Mammary epithelial cell (primary cell): ENCODE measurements at regions of chr19 and their contacts with region 1.

Region 1: DNA sequence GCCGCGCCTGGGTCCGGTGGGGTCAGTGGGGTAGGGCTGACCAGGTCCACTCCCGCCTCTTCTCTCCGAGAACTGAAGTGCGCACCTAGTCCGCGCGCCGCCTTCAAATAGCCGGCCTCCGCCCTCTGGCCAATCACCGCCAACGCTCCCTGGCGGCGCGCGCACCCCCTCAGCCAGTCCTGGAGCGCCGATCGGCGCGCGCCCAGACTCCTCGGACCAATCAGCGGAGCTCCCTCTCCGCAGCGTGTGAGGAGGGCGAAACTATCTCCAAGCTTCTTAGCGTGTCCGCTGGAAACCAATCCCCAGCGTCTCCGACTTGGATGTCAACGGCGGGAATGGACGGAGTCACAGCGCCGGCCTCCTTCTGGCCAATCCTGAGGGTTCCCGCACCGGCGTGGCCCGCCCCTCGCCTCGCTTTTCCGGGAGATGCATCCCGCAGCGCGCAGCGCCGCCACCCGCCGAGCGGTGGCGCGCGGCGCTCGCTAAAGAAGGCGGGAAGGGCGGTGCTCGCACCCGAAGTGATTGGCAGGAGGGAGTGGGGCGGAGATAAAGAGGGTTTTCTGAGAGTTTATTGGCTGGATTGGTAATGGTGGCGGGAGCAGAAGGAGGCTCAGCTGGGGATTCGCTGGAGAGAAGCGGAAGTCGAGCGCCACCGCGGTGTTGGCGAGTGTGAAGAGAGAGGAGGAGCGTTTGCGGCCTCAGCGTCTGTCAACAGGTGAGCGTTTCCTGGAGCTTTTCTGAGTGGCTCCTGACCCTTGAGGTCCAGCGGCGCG is at the start of gene ASF1B:
- DNase-seq: peak; percentile 100
- H3K4me3 ChIP-seq: peak within 1 kb of the TSS; percentile 72 to 99 (median 91)
- H3K27ac ChIP-seq: peak within 1 kb of the TSS; percentile 67
- H3K4me1 ChIP-seq: peaks cover 4% of the 10 kb centered on the region
- H3K27me3 ChIP-seq: no peaks in the 10 kb centered on the region
- CTCF ChIP-seq: peak; percentile 60 to 91
- total RNA-seq, gene ASF1B: 2.5 to 23.4 TPM

Region 2: DNA sequence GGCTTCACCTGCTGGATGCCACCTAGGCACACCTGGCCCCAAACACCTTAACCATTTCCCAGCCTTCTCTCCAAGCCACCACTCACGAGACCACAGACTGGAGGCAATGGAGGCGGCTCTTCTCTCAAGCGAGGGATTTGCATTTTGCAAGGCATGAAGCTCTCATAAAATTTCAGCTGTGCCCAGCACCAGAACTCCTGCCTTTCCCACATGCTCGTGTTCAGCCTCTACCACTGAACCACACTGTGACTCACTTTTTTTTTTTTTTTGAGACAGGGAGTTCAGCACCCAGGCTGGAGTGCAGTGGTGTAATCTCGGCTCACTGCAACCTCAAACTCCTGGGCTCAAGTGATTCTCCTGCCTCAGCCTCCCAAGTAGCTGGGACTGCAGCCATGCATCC is 249.2 kb before region 1 on chr19:
- CTCF ChIA-PET with region 1: interaction called, 3 read pairs
- dilution Hi-C with region 1: loop called (anchors 5 kb)
- in situ Hi-C with region 1: no loop called
- intact Hi-C with region 1: no loop called
- DNase-seq: peak; percentile 83
- H3K4me3 ChIP-seq: no peak overlapping the region
- H3K27ac ChIP-seq: no peak overlapping the region
- H3K4me1 ChIP-seq: peaks cover 39% of the 10 kb centered on the region
- H3K27me3 ChIP-seq: no peaks in the 10 kb centered on the region
- CTCF ChIP-seq: no peak

Region 3: DNA sequence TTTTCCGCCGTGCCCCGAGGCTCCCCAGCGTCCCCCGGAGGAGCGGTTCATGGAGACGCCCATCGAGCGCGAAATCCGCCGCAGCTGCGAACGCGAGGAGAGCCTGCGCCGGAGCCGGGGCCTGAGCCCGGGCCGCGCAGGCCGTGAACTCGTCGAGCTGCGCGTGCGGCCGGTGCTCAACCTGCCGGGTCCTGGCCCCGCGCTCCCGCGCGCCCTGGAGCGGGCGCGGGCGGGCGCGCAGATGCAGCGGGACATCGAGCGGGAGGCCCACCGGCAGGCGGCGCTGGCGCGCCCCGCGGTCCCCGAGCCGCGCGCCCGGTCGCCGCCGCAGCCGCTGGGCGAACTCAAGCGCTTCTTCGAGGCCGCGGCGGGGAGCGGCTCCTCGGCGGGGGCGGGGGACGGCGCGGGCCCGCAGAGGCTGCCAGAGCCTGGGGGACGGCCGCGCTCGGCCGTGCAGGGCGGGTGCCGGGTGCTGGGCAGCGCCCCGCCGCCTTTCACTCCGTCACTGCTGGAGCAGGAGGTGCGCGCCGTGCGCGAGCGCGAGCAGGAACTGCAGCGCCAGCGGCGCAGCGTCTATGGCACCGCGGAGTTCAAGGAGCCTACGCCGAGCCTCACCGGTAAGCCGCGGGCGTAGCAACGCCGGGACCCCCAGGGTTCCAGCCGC is 63.3 kb before region 1 on chr19:
- CTCF ChIA-PET with region 1: interaction called, 3 read pairs
- dilution Hi-C with region 1: loop called (anchors 5 kb)
- in situ Hi-C with region 1: no loop called
- intact Hi-C with region 1: loop called (anchors 5 kb)
- DNase-seq: peak; percentile 74
- H3K4me3 ChIP-seq: peak overlapping the region; percentile 48 to 84 (median 49)
- H3K27ac ChIP-seq: peak overlapping the region; percentile 29
- H3K4me1 ChIP-seq: peaks cover 26% of the 10 kb centered on the region
- H3K27me3 ChIP-seq: no peaks in the 10 kb centered on the region
- CTCF ChIP-seq: peak in 1 of 2 donors; percentile 38

Region 4: DNA sequence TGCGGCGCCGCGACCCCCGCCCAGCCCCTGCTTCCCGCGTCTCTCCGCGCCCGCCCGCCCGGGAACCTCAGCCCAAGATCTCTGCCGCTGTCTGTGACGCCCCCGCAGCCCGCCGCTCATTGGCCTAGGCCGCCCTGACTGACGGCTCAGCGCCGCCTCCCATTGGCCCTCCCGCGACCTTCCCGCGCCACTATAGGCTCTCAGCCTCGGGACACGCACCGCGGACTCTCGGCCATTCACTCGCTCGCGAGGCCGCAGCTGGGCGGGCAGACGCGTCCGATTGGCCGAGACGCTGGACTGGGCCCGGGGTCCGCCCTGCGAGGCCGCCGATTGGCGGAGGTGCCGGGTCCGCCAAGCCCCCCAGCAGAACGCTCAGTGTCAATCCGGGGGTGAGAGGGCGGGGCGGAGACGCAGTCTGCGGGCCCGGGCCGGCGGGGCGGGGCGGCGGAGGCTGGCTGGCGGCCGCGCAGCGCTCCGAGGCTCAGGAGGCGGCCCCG is 19.0 kb before region 1 on chr19 and contains the start of gene PRKACA:
- CTCF ChIA-PET with region 1: no interaction called
- dilution Hi-C with region 1: no loop called
- in situ Hi-C with region 1: no loop called
- intact Hi-C with region 1: loop called (anchors 2 kb)
- DNase-seq: peak; percentile 100
- H3K4me3 ChIP-seq: peak within 1 kb of the TSS; percentile 83 to 87 (median 87)
- H3K27ac ChIP-seq: peak within 1 kb of the TSS; percentile 27
- H3K4me1 ChIP-seq: peaks cover 36% of the 10 kb centered on the region
- H3K27me3 ChIP-seq: no peaks in the 10 kb centered on the region
- CTCF ChIP-seq: no peak
- total RNA-seq, gene PRKACA: 44.0 to 82.1 TPM

Region 5: GRCh38 chr19:14347999-14348889 is 211.5 kb after region 1 on chr19:
- CTCF ChIA-PET with region 1: interaction called, 3 read pairs
- dilution Hi-C with region 1: no loop called
- in situ Hi-C with region 1: no loop called
- intact Hi-C with region 1: loop called (anchors 2 kb)
- DNase-seq: peak; percentile 26
- H3K4me3 ChIP-seq: peak overlapping the region in 1 of 3 experiments; percentile 22
- H3K27ac ChIP-seq: no peak overlapping the region
- H3K4me1 ChIP-seq: no peaks in the 10 kb centered on the region
- H3K27me3 ChIP-seq: peaks cover 2% of the 10 kb centered on the region
- CTCF ChIP-seq: peak; percentile 77 to 98

Region 6: GRCh38 chr19:14413693-14414181 is 277.0 kb after region 1 on chr19:
- CTCF ChIA-PET with region 1: no interaction called
- dilution Hi-C with region 1: loop called (anchors 5 kb)
- in situ Hi-C with region 1: no loop called
- intact Hi-C with region 1: no loop called
- DNase-seq: no peak
- H3K4me3 ChIP-seq: no peak overlapping the region
- H3K27ac ChIP-seq: no peak overlapping the region
- H3K4me1 ChIP-seq: peaks cover 16% of the 10 kb centered on the region
- H3K27me3 ChIP-seq: no peaks in the 10 kb centered on the region
- CTCF ChIP-seq: no peak

Region 7: GRCh38 chr19:14556662-14557188 is 420.0 kb after region 1 on chr19:
- CTCF ChIA-PET with region 1: no interaction called
- dilution Hi-C with region 1: no loop called
- in situ Hi-C with region 1: no loop called
- intact Hi-C with region 1: loop called (anchors 5 kb)
- DNase-seq: peak; percentile 76
- H3K4me3 ChIP-seq: no peak overlapping the region
- H3K27ac ChIP-seq: peak overlapping the region; percentile 57
- H3K4me1 ChIP-seq: peaks cover 63% of the 10 kb centered on the region
- H3K27me3 ChIP-seq: no peaks in the 10 kb centered on the region
- CTCF ChIP-seq: peak; percentile 94 to 98